GM10248 (cell line): ENCODE measurements at regions of chr1 and their contacts with region 1.

Region 1: GRCh38 chr1:214123061-214123784 is 135.4 kb downstream of the PROX1 start:
- DNase-seq: peak; percentile 60
- CTCF ChIP-seq: peak; percentile 40

Region 2: GRCh38 chr1:213122514-213122929 is 1000.7 kb before region 1 on chr1:
- CTCF ChIA-PET with region 1: interaction called, 10 read pairs
- POLR2A ChIA-PET with region 1: no interaction called
- DNase-seq: no peak
- CTCF ChIP-seq: peak; percentile 28

Region 3: GRCh38 chr1:213374369-213374768 is 748.9 kb before region 1 on chr1:
- CTCF ChIA-PET with region 1: interaction called, 11 read pairs
- POLR2A ChIA-PET with region 1: no interaction called
- DNase-seq: peak; percentile 69
- CTCF ChIP-seq: peak; percentile 73

Region 4: GRCh38 chr1:215905493-215906115 is 1782.4 kb after region 1 on chr1:
- CTCF ChIA-PET with region 1: no interaction called
- POLR2A ChIA-PET with region 1: no interaction called
- DNase-seq: no peak
- CTCF ChIP-seq: no peak